HCT116 (cell line): ENCODE measurements at regions of chr14 and their contacts with region 1.

Region 1: GRCh38 chr14:81170104-81170828 is 50.5 kb downstream of the GTF2A1 start:
- DNase-seq: peak; percentile 75
- ATAC-seq: peak; percentile 99
- H3K4me3 ChIP-seq: peak overlapping the region; percentile 50 to 59
- H3K27ac ChIP-seq: peak overlapping the region; percentile 78
- H3K4me1 ChIP-seq: peaks cover 3 to 13% of the 10 kb centered on the region in 2 experiments; a peak in 2 of 4 replicates
- H3K27me3 ChIP-seq: no peaks in the 10 kb centered on the region
- CTCF ChIP-seq: peak; percentile 56 to 92 (median 80); a peak in 5 of 6 replicates
- POLR2A ChIP-seq: peak; percentile 87
- RAD21 ChIP-seq: peak; percentile 69

Region 2: DNA sequence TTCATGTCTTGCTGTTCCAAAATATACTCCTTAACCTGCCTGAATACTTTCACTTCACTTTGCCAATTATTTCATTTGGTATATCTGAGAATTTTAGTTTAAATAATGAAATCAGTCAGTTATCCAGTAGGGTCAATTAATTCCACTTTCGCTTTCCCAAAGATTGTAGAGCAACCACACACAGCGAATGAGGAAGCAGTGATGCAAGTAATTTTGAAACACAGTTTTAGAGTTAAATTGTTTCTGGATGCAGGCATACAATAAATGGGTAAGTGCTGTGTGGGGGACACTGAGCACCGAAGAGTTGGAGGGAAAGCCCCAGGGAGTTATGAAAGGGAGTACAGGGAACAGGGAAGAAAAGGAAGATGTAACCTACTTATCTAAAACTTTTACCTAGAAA is 152.0 kb before region 1 on chr14:
- CTCF ChIA-PET with region 1: no interaction called
- POLR2A ChIA-PET with region 1: no interaction called
- RAD21 ChIA-PET with region 1: no interaction called
- intact Hi-C with region 1: no loop called
- DNase-seq: no peak
- ATAC-seq: no peak
- H3K4me3 ChIP-seq: no peak overlapping the region
- H3K27ac ChIP-seq: no peak overlapping the region
- H3K4me1 ChIP-seq: no peaks in the 10 kb centered on the region
- H3K27me3 ChIP-seq: no peaks in the 10 kb centered on the region
- CTCF ChIP-seq: no peak
- POLR2A ChIP-seq: no peak
- RAD21 ChIP-seq: no peak

Region 3: DNA sequence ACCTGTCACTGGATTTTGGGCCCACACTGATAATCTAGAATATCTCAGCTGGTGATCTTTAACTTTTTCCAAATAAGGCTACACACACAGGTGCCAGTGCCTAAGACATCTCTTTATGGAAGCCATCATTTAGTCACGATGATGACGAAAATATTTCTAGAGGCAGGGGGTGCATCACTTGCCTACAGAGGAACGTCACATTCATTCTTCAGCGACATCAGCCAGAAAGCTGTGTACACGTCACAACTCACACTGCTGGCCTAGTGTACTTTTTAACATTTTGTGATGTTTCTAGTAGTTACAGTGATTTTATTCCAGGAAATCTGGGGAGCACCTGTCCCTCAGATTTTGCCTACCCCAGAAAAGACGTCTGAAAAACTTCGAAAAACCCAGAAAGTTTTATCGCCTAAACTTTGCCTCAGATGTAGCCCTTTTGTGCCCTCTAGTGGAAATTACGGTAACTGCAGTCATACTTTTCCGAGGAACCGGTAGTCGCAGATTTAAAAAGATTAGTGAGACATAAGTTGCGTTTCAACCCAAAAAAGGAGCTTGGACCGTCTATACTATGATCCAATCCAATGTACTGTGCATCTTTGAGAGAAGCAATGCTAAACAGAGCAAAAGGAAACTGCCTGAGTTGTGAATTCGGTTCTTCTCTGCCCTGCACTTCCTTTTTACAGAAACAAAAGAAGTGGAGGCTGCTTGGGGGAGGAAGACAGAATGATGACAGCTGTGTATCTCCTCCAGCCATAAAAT is 294.2 kb after region 1 on chr14:
- CTCF ChIA-PET with region 1: interaction called, 3 read pairs
- POLR2A ChIA-PET with region 1: no interaction called
- RAD21 ChIA-PET with region 1: no interaction called
- intact Hi-C with region 1: loop called (anchors 5 kb)
- DNase-seq: peak; percentile 40
- ATAC-seq: peak; percentile 67
- H3K4me3 ChIP-seq: peak overlapping the region; percentile 32 to 49
- H3K27ac ChIP-seq: no peak overlapping the region
- H3K4me1 ChIP-seq: peaks cover 0 to 16% of the 10 kb centered on the region in 2 experiments; a peak in 3 of 4 replicates
- H3K27me3 ChIP-seq: no peaks in the 10 kb centered on the region
- CTCF ChIP-seq: peak; percentile 67 to 95 (median 76)
- POLR2A ChIP-seq: no peak
- RAD21 ChIP-seq: peak; percentile 82